OCI-LY7 (cell line): ENCODE measurements at regions of chr11 and their contacts with region 1.

Region 1: GRCh38 chr11:73931039-73931645 is 19.7 kb upstream of the DNAJB13 start:
- DNase-seq: peak; percentile 74
- H3K4me3 ChIP-seq: no peak overlapping the region
- H3K27ac ChIP-seq: no peak overlapping the region
- H3K4me1 ChIP-seq: no peaks in the 10 kb centered on the region
- CTCF ChIP-seq: peak; percentile 80

Region 2: DNA sequence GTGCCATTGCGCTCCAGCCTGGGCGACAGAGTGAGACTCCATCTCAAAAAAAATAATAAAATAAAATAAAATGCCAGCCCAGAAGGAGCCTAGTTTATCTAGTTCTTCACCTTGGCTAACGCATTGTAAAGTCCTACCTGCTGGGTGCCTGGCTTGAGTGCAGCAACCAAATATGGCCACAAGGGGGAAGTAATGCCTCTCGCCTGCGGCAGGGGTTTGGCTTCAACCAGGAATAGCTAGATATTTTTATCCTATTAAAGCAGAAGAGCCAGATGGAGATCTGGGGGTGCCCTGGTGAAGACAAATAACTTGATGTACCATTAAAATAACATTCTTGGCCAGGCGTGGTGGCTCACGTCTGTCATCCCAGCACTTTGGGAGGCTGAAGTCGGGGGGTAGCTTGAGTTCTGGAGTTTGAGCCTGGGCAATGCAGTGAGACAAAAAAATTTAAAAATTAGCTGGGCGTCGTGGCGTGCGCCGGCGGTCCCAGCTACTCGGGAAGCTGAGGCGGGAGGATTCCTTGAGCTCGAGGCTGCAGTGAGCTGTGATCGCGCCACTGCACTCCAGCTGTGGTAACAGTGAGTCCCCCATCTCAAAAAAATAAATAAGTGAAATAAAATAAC is 305.3 kb before region 1 on chr11:
- CTCF ChIA-PET with region 1: no interaction called
- POLR2A ChIA-PET with region 1: no interaction called
- intact Hi-C with region 1: loop called (anchors 5 kb)
- DNase-seq: peak; percentile 73
- H3K4me3 ChIP-seq: no peak overlapping the region
- H3K27ac ChIP-seq: no peak overlapping the region
- H3K4me1 ChIP-seq: no peaks in the 10 kb centered on the region
- CTCF ChIP-seq: peak; percentile 88

Region 3: GRCh38 chr11:74055938-74056337 is 124.8 kb after region 1 on chr11:
- CTCF ChIA-PET with region 1: no interaction called
- POLR2A ChIA-PET with region 1: no interaction called
- intact Hi-C with region 1: no loop called
- DNase-seq: no peak
- H3K4me3 ChIP-seq: no peak overlapping the region
- H3K27ac ChIP-seq: no peak overlapping the region
- H3K4me1 ChIP-seq: no peaks in the 10 kb centered on the region
- CTCF ChIP-seq: no peak